Activated T-helper 2 cell treated with anti-CD3 and anti-CD28 coated beads, Interferon-gamma antibody, Interleukin-2, Interleukin-4, amounts not matched to agents 10 μg/mL and 5 μg/mL and 100 μg/mL, durations not matched to agents 14 hours and 24 hours and 36 hours (primary cell): ENCODE measurements at regions of chr9 and their contacts with region 1.

Region 1: DNA sequence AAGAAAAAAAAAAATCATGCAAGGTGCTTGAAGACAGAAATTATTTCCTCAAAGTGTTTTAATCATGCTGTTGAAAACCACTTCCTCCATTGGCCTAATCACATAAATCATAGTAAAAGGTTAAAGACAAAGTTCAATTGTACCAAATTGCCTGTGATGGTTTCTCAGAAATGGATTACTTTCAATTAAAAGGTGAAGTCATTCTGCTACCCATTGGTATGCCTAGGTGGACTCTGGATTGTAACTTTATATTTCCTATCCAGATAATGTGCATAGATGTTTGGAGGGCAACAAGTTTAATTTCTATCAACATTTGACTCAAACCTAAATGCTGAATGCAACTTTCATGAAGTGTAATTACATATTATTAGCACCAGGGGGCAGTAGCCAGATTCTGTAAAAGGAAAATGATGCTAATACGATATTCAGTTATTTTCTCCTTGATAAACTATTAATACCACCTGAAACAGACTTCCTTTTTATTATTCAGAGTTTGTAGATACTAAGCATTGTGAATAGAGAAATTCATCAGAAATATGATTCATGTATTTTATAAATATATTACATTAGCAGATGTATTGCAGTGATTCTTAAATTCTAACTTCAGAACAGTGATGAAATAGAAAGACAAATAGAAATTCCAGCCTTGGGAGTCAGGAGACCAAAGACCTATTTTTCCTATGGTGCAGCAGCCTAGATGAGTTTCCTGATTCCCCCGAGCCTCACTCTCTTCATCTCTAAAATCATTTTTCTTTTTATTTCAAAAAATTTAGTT is 148.2 kb downstream of the CAAP1 start:
- DNase-seq: no peak
- H3K4me3 Mint-ChIP-seq: no peak overlapping the region
- H3K27ac Mint-ChIP-seq: no peak overlapping the region
- H3K4me1 Mint-ChIP-seq: no peaks in the 10 kb centered on the region
- H3K27me3 Mint-ChIP-seq: peaks cover 2% of the 10 kb centered on the region

Region 2: DNA sequence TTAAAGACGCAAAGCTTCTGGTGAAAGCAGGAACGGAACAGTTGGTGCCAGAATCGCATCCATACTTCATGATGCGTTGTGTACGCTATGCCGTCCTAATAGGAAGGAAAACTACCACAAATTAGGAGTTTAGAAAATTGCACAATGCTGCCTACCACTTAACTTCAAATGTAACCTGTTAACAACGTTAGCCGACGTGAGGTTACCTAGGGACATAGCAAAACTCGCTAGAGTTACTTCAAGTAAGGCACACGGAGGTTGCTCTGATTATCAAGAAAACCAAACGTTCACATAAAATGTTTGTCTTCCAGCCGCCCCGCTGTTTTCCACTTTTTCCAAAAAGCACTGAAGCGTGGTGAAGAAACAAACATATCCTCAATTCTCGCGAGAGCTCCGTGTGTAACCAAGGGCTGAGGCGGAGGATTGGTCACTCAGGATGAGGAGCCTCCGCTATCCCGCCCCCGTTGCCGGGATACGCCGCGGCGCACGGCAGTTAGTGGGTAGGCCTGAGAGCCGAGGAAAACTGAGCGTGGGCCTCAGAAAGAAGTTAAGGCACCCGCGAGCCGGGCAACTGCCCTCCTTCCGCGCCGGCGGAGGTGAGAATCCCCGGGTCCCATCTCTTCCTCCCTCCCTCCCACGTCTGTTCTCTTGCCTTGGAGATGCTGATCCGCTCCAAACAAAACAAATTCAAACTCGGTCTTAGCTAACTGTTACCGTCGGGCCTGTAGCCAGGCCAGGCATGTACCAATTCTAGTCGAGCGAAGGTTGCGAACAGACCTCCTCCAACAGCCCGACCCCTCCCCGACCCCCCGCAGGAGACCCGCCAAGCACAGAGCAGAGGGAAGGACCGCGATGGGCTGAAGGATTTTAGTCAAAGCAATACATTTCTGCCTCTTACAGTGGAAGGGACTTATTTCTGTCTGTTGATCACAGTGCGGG is 211.8 kb after region 1 on chr9 and contains the start of gene IFT74:
- intact Hi-C with region 1: no loop called
- DNase-seq: peak; percentile 92
- H3K4me3 Mint-ChIP-seq: peak within 1 kb of the TSS; percentile 86
- H3K27ac Mint-ChIP-seq: peak within 1 kb of the TSS; percentile 92
- H3K4me1 Mint-ChIP-seq: peaks cover 34% of the 10 kb centered on the region
- H3K27me3 Mint-ChIP-seq: no peaks in the 10 kb centered on the region
- total RNA-seq, gene IFT74: 8.3 and 10.4 TPM in 2 replicates

Region 3: DNA sequence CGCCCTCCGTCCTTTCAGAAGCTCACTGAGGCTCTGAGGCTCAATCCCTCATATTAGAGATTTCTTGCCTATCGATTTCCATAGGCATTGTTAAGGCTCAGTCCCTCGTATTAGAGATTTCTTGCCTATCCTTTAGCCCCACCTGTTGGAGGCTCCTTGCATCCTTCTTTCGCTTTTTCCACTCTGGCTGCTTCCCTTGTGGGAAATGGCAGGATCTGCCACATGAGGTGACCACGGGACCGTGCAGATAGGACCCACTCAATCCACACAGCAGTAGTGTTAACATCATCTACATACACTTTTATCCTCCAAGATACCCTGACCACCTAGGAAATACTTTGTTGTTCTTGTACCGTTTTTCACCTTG is 231.3 kb after region 1 on chr9:
- intact Hi-C with region 1: loop called (anchors 1 kb)
- DNase-seq: no peak
- H3K4me3 Mint-ChIP-seq: no peak overlapping the region
- H3K27ac Mint-ChIP-seq: no peak overlapping the region
- H3K4me1 Mint-ChIP-seq: no peaks in the 10 kb centered on the region
- H3K27me3 Mint-ChIP-seq: no peaks in the 10 kb centered on the region